ENCODE measurements at regions of chr12 and their contacts with region 1.

Region 1: GRCh38 chr12:52681526-52682380 is 1.5 kb upstream of the KRT1 start:
- DNase-seq: peak in 7 of 9 donors; percentile 60 to 74 (median 67)
- ATAC-seq: peak; percentile 90
- H3K4me3 ChIP-seq: no peak overlapping the region
- H3K4me3 Mint-ChIP-seq: peak overlapping the region in 9 of 10 donors; percentile 2 to 76 (median 48)
- H3K27ac ChIP-seq: peak overlapping the region; percentile 42
- H3K27ac Mint-ChIP-seq: peak overlapping the region in 8 of 9 donors; percentile 78 to 93 (median 86)
- H3K4me1 ChIP-seq: peaks cover 6 to 24% of the 10 kb centered on the region in 2 donors
- H3K4me1 Mint-ChIP-seq: peaks cover 16 to 76% (median 66%) of the 10 kb centered on the region in 7 donors
- H3K27me3 ChIP-seq: peaks cover 0 to 4% of the 10 kb centered on the region in 2 donors
- H3K27me3 Mint-ChIP-seq: peaks cover 0 to 35% (median 0%) of the 10 kb centered on the region in 5 donors

Region 2: DNA sequence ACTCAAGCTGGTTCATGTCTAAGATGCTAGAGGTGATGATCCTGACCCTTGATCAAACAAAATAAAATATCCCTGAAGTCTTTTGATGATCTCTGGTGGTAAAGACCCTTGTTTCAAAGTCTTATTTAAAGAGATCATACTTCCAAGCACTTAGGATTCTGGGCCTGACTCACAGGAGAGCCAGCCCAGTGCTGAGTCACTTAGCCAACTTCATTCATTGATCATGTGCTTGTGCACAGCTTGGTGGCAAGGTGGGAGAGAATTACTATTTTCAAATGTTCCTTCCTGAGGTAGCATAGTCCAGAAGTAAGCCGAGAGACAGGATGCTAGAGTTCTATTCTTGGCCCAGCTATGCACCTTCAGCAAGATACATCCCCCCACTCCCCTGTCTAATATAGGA is 1050.2 kb before region 1 on chr12:
- CTCF ChIA-PET with region 1: no interaction called
- POLR2A ChIA-PET with region 1: no interaction called
- intact Hi-C with region 1: no loop called
- DNase-seq: no peak
- ATAC-seq: no peak
- H3K4me3 ChIP-seq: no peak overlapping the region
- H3K4me3 Mint-ChIP-seq: no peak overlapping the region
- H3K27ac ChIP-seq: no peak overlapping the region
- H3K27ac Mint-ChIP-seq: no peak overlapping the region
- H3K4me1 ChIP-seq: no peaks in the 10 kb centered on the region
- H3K4me1 Mint-ChIP-seq: no peaks in the 10 kb centered on the region
- H3K27me3 ChIP-seq: no peaks in the 10 kb centered on the region
- H3K27me3 Mint-ChIP-seq: peaks cover 10 to 49% (median 20%) of the 10 kb centered on the region in 5 donors

Region 3: DNA sequence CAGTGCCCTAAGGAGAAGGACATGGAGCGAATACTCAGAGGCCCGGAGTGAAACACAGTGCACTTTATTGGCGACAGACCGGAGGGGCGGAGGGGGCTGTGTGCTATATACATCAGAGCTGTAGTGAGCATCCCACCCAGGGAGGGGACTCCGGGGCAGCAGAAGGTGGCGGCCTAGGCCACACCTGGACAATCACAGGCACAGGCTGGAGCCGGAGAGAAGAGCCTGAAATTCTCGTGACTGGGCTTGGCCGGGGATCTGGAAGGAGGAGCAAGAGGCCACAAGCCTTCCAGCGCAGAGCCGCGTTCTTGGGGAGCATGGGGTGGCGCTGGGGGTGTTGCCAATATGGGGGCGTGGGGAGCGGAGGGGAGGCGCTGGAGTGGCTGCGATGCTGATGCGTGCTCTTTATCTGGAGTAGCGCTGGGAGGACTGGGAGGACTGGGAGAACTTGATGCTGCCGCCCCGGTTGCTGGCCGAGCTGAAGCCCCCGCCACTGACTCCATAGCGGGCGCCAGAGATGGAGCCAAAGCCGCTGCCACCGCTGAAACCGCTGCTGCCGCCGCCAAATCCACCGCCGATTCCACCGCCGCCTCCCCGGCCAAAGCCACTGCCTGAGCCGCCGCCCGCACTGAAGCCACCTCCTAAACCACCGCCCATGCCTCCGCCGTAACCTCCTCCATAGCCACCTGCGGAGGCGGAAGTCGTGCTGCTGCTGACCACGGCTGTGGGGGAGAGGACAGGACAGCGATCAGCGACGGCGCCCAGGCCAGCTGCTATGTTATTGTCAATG is 108.1 kb after region 1 on chr12:
- CTCF ChIA-PET with region 1: no interaction called
- POLR2A ChIA-PET with region 1: no interaction called
- intact Hi-C with region 1: loop called in 1 of 2 experiments (anchors 1 kb)
- DNase-seq: peak in 1 of 9 donors; percentile 5
- ATAC-seq: no peak
- H3K4me3 ChIP-seq: no peak overlapping the region
- H3K4me3 Mint-ChIP-seq: peak overlapping the region in 8 of 10 donors; percentile 5 to 65 (median 50)
- H3K27ac ChIP-seq: no peak overlapping the region
- H3K27ac Mint-ChIP-seq: peak overlapping the region in 2 of 9 donors; percentile 28 to 62
- H3K4me1 ChIP-seq: peaks cover 0 to 5% of the 10 kb centered on the region in 2 donors
- H3K4me1 Mint-ChIP-seq: peaks cover 8 to 36% (median 26%) of the 10 kb centered on the region in 7 donors
- H3K27me3 ChIP-seq: no peaks in the 10 kb centered on the region
- H3K27me3 Mint-ChIP-seq: peaks cover 20 to 54% (median 27%) of the 10 kb centered on the region in 5 donors

Measured in naive thymus-derived CD4-positive, alpha-beta T cell (primary cell).